GM12878 (cell line): ENCODE measurements at regions of chr10 and their contacts with region 1.

Region 1: DNA sequence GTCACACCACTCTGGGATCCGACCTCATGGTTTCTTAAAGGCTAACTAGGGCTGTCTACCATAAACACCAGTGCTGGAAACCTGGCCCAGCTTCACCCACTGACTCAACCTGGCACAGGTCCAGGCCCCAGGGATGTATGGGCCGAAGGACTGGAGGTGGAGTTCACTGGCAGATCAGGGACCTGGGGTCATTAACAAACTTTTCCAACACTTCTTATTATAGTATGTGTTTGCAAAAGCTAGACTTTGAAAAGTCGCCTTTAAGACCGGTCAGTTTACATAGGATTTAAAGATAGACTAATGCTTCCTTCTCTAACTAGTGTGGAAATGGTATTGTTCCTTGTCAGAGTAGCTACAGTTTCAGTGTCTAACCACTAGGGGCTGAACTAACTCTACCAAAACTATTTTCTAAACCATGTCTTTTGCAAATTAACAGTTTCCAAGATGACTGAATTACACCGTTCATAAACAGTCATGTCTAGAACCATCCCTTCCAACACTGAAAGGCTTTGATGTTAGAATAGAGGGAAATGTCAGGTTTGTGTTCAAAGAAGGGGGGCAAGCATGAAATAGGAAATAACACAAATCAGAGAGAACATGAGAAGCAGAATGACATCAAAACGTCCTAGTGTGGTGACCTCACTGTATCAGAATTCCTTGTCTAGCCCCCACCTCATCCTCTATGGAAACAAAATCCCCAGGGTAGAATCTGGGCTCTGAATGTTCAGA is 29.7 kb downstream of the STN1 start:
- DNase-seq: no peak
- ATAC-seq: peak; percentile 86
- H3K4me3 ChIP-seq: no peak overlapping the region
- H3K27ac ChIP-seq: no peak overlapping the region
- H3K4me1 ChIP-seq: no peaks in the 10 kb centered on the region
- H3K27me3 ChIP-seq: no peaks in the 10 kb centered on the region
- CTCF ChIP-seq: peak; percentile 83 to 95 (median 91); a peak in 5 of 6 replicates
- EP300 ChIP-seq: no peak
- POLR2A ChIP-seq: no peak
- RAD21 ChIP-seq: peak; percentile 87

Region 2: GRCh38 chr10:103839872-103840746 is 48.2 kb before region 1 on chr10:
- CTCF ChIA-PET with region 1: no interaction called
- POLR2A ChIA-PET with region 1: no interaction called
- RAD21 ChIA-PET with region 1: no interaction called
- SMC1A ChIA-PET with region 1: no interaction called
- in situ Hi-C with region 1: no loop called
- intact Hi-C with region 1: no loop called
- DNase-seq: no peak
- ATAC-seq: no peak
- H3K4me3 ChIP-seq: no peak overlapping the region
- H3K27ac ChIP-seq: no peak overlapping the region
- H3K4me1 ChIP-seq: no peaks in the 10 kb centered on the region
- H3K27me3 ChIP-seq: no peaks in the 10 kb centered on the region
- CTCF ChIP-seq: no peak
- EP300 ChIP-seq: no peak
- POLR2A ChIP-seq: no peak
- RAD21 ChIP-seq: no peak

Region 3: DNA sequence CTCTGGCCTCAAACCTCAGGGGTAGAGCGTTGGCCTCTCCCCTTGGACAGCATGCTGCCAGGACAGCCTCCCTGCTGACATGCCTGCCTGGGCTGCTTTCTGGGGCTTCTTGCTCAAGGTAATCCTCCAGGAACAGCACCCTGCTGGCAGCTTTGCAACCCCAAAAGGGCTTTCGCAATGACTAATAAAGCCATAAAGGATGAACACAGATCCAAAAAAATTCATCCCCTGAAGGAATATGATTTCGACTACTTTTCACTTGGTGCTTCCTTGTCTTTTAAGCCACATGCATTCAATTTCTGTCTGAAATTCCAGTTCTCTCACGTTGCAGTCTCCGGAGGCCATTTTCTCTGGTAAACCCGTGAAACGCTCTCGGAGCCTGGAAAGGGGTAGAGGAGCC is 17.8 kb before region 1 on chr10:
- CTCF ChIA-PET with region 1: interaction called, 13 read pairs
- POLR2A ChIA-PET with region 1: no interaction called
- RAD21 ChIA-PET with region 1: interaction called, 5 read pairs
- SMC1A ChIA-PET with region 1: interaction called, 4 read pairs
- in situ Hi-C with region 1: no loop called
- intact Hi-C with region 1: no loop called
- DNase-seq: no peak
- ATAC-seq: no peak
- H3K4me3 ChIP-seq: no peak overlapping the region
- H3K27ac ChIP-seq: no peak overlapping the region
- H3K4me1 ChIP-seq: no peaks in the 10 kb centered on the region
- H3K27me3 ChIP-seq: no peaks in the 10 kb centered on the region
- CTCF ChIP-seq: no peak
- EP300 ChIP-seq: no peak
- POLR2A ChIP-seq: no peak
- RAD21 ChIP-seq: no peak

Region 4: GRCh38 chr10:103918053-103918846 is 30.0 kb after region 1 on chr10 and contains the start of gene STN1:
- CTCF ChIA-PET with region 1: interaction called, 5 read pairs
- POLR2A ChIA-PET with region 1: interaction called, 10 read pairs
- RAD21 ChIA-PET with region 1: interaction called, 5 read pairs
- SMC1A ChIA-PET with region 1: interaction called, 4 read pairs
- in situ Hi-C with region 1: no loop called
- intact Hi-C with region 1: no loop called
- DNase-seq: peak; percentile 77
- ATAC-seq: peak; percentile 96
- H3K4me3 ChIP-seq: peak within 1 kb of the TSS; percentile 83
- H3K27ac ChIP-seq: peak within 1 kb of the TSS; percentile 83
- H3K4me1 ChIP-seq: peaks cover 12% of the 10 kb centered on the region
- H3K27me3 ChIP-seq: no peaks in the 10 kb centered on the region
- CTCF ChIP-seq: 0 out of 6 replicates have a peak, but pooled peaks of 1 of the 3 experiments have one; percentile 3
- EP300 ChIP-seq: 0 out of 4 replicates have a peak, but pooled peaks of 1 of the 2 experiments have one; percentile 14
- POLR2A ChIP-seq: peak; percentile 85
- RAD21 ChIP-seq: no peak
- polyA plus RNA-seq, gene STN1: 26.5 to 27.8 TPM

Region 5: GRCh38 chr10:104016661-104017060 is 128.4 kb after region 1 on chr10:
- CTCF ChIA-PET with region 1: interaction called, 5 read pairs
- POLR2A ChIA-PET with region 1: no interaction called
- RAD21 ChIA-PET with region 1: interaction called, 3 read pairs
- SMC1A ChIA-PET with region 1: interaction called, 7 read pairs
- in situ Hi-C with region 1: no loop called
- intact Hi-C with region 1: loop called (anchors 5 kb)
- DNase-seq: no peak
- ATAC-seq: no peak
- H3K4me3 ChIP-seq: no peak overlapping the region
- H3K27ac ChIP-seq: no peak overlapping the region
- H3K4me1 ChIP-seq: no peaks in the 10 kb centered on the region
- H3K27me3 ChIP-seq: no peaks in the 10 kb centered on the region
- CTCF ChIP-seq: no peak
- EP300 ChIP-seq: no peak
- POLR2A ChIP-seq: no peak
- RAD21 ChIP-seq: no peak

Region 6: DNA sequence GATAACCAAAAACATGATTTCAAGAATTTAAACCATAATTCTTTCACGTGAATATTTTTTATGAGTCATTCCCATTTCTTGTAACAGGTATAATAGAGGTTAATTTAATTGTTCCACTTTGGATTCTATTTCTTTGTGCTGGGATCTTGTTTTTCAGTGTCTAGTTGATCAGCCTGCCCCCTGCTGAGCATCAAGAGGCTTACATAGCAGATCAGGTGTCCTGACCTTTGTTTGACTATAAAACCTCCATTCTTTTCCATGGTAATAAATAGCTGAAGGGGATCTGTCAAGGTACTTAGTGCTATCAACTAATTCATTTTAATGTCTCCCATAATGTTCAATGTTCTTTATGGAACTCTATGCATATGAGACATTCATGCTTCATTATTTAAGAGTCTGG is 192.5 kb after region 1 on chr10:
- CTCF ChIA-PET with region 1: interaction called, 29 read pairs
- POLR2A ChIA-PET with region 1: no interaction called
- RAD21 ChIA-PET with region 1: interaction called, 4 read pairs
- SMC1A ChIA-PET with region 1: interaction called, 5 read pairs
- in situ Hi-C with region 1: loop called (anchors 5 kb)
- intact Hi-C with region 1: loop called (anchors 1 kb)
- DNase-seq: no peak
- ATAC-seq: peak; percentile 69
- H3K4me3 ChIP-seq: no peak overlapping the region
- H3K27ac ChIP-seq: no peak overlapping the region
- H3K4me1 ChIP-seq: no peaks in the 10 kb centered on the region
- H3K27me3 ChIP-seq: no peaks in the 10 kb centered on the region
- CTCF ChIP-seq: peak; percentile 47 to 53 (median 52); a peak in 5 of 6 replicates
- EP300 ChIP-seq: no peak
- POLR2A ChIP-seq: no peak
- RAD21 ChIP-seq: peak; percentile 46

Region 7: DNA sequence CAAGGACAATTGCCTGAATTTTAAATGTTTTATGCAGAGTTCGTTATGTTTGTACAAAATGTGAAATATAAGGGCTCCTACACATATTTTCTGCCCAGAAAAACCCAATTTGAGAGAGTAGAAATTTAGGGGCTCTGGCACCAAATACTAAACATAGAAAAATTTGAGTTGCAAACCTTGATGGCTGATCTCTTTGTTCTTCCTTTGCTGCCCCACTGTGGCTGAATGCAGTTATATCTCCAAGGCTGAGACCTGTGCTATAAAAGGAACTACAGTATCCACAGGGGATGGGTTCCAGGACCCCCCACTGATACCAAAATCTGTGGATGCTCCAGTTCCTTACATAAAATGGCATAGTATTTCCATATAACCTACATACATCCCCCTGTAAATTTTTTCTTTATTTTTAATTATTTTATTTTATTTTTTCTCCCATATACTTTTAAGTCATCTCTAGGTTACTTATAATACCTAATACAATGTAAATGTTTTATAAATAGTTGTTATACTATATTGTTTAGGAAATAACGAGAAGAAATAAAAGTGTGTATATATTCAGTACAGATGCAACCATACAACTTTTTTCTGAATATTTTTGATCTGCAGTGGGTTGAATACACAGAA is 321.4 kb after region 1 on chr10:
- CTCF ChIA-PET with region 1: interaction called, 13 read pairs
- POLR2A ChIA-PET with region 1: no interaction called
- RAD21 ChIA-PET with region 1: interaction called, 10 read pairs
- SMC1A ChIA-PET with region 1: interaction called, 11 read pairs
- in situ Hi-C with region 1: loop called (anchors 5 kb)
- intact Hi-C with region 1: loop called (anchors 1 kb)
- DNase-seq: no peak
- ATAC-seq: peak; percentile 82
- H3K4me3 ChIP-seq: no peak overlapping the region
- H3K27ac ChIP-seq: no peak overlapping the region
- H3K4me1 ChIP-seq: no peaks in the 10 kb centered on the region
- H3K27me3 ChIP-seq: no peaks in the 10 kb centered on the region; a peak in 3 of 4 replicates
- CTCF ChIP-seq: peak; percentile 48 to 58 (median 51); a peak in 5 of 6 replicates
- EP300 ChIP-seq: no peak
- POLR2A ChIP-seq: no peak
- RAD21 ChIP-seq: peak; percentile 63